Body of pancreas (tissue), 4 donors: ENCODE measurements at regions of chr4 and their contacts with region 1.

Region 1: GRCh38 chr4:77358315-77358928 is 201.4 kb downstream of the CCNG2 start:
- DNase-seq: peak; percentile 15 to 38 (median 32)
- ATAC-seq: peak; percentile 77
- H3K4me3 ChIP-seq: no peak overlapping the region
- H3K27ac ChIP-seq: no peak overlapping the region
- H3K4me1 ChIP-seq: no peaks in the 10 kb centered on the region
- H3K27me3 ChIP-seq: no peaks in the 10 kb centered on the region
- CTCF ChIP-seq: peak; percentile 31 to 78 (median 59)
- POLR2A ChIP-seq: no peak

Region 2: GRCh38 chr4:77240469-77241066 is 117.9 kb before region 1 on chr4:
- intact Hi-C with region 1: loop called (anchors 5 kb)
- DNase-seq: peak; percentile 72 to 79 (median 78)
- ATAC-seq: peak; percentile 87
- H3K4me3 ChIP-seq: no peak overlapping the region
- H3K27ac ChIP-seq: no peak overlapping the region
- H3K4me1 ChIP-seq: no peaks in the 10 kb centered on the region
- H3K27me3 ChIP-seq: no peaks in the 10 kb centered on the region
- CTCF ChIP-seq: peak; percentile 47 to 88 (median 80)
- POLR2A ChIP-seq: no peak